CD8-positive, alpha-beta memory T cell (primary cell): ENCODE measurements at regions of chr12 and their contacts with region 1.

Region 1: DNA sequence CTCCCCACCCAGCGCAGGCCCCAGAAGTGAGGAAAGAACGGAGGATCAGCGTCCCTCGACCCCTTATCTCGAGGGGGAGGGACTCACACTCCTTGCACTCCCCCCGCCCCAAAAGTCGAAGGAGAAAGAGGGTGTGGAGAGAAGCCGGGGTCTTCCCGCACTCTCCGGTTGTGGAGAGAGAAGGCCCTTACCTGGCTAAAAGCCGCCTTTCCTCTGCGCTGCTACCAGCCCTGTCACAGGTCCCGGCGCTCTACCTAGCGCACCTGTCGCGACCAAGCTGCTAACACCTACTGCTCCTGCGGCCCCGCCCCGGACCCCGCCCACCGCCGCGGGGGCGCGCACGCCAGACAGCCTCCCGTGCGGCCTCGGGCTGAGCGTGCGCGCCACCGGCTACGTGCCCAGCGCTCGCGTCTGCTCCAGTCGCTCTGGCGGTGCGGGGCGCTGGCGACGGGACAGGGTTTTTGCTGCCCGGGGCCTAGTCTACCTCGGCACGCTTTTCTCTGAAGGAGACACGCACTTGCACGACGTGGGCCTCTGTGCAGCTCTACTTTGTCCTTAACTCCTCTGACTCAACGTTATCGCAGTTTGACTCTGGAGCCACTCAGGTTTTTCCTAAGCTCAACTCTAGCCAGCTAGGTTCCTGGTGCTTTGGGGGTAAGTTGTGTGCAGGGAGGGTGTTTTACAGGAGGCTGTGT is at the start of gene LIMA1:
- DNase-seq: peak; percentile 84 to 94 (median 91)
- H3K4me3 ChIP-seq: peak within 1 kb of the TSS; percentile 93
- H3K4me3 Mint-ChIP-seq: peak within 1 kb of the TSS; percentile 89 to 96 (median 90)
- H3K27ac ChIP-seq: peak within 1 kb of the TSS; percentile 85
- H3K27ac Mint-ChIP-seq: peak within 1 kb of the TSS; percentile 73 to 96 (median 86)
- H3K4me1 ChIP-seq: peaks cover 22% of the 10 kb centered on the region
- H3K4me1 Mint-ChIP-seq: peaks cover 17 to 24% (median 23%) of the 10 kb centered on the region in 3 donors
- H3K27me3 ChIP-seq: no peaks in the 10 kb centered on the region
- H3K27me3 Mint-ChIP-seq: no peaks in the 10 kb centered on the region
- total RNA-seq, gene LIMA1: 95.4 to 103 TPM

Region 2: DNA sequence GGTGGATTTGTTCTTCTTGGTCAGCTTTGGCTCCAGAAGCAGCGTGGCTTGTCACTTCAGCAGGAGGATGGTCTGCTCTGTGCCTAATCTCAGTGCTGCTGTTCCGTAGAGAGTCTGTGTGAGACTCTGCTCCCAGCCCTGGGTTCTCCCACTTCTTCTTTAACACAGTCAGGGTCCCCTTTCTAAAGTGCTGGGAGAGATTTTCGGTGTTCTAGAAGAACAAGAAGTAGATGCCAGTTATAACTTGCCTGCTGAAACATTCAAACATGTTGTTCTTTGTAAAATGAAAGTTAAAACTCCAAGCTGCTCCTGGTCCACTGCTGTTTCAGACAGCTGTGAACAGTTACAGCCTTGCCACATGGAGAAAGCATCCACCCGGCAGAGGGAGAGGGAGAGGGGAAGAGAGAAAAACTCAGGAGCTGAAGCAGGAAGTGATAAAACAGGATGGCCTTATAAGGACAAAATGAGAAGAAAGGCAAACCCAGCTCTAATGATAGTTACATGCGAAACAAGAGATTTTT is 61.0 kb before region 1 on chr12:
- CTCF ChIA-PET with region 1: interaction called, 10 read pairs
- POLR2A ChIA-PET with region 1: interaction called, 11 read pairs
- DNase-seq: peak in 3 of 5 donors; percentile 8 to 42 (median 28)
- H3K4me3 ChIP-seq: peak overlapping the region; percentile 82
- H3K4me3 Mint-ChIP-seq: no peak overlapping the region
- H3K27ac ChIP-seq: peak overlapping the region; percentile 60
- H3K27ac Mint-ChIP-seq: no peak overlapping the region
- H3K4me1 ChIP-seq: peaks cover 24% of the 10 kb centered on the region
- H3K4me1 Mint-ChIP-seq: peaks cover 18 to 28% (median 21%) of the 10 kb centered on the region in 3 donors
- H3K27me3 ChIP-seq: no peaks in the 10 kb centered on the region
- H3K27me3 Mint-ChIP-seq: no peaks in the 10 kb centered on the region